Dorsolateral prefrontal cortex (tissue), 120 donors: ENCODE measurements at regions of chr17 and their contacts with region 1.

Region 1: DNA sequence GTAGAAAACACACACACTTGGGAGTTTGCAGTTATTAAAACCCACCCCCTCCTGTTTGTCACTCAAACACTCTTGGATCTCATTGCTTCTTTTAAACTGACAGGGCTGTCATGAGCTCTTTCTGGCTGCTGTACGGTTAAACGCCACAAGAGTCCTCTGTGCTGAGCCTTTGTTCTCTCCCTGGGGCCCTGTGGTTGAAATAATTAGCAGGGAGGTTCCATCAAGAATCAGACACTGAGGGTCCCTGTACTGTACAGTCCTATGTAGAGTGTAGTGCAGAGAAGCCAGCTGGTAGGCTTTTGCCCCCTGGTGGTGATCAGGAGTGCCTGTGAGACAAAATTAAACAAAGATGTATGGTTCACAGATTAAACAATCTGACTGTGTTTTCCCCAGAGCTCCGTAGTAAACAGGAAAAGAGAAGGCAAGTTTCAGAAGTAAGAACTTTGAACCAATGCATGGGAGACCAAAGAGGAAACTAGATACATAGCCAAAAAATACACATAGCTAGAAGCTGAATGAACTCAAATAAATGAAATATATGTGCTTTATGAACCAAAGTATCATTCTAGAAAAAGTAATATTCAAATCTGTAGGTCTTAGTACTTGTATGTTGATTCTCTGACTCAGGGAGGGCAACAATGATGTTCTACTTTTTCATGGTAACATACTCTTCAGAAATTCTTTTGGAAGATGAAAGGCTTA is 1.4 kb upstream of the SSH2 start:
- DNase-seq: peak; percentile 55 to 93 (median 81)
- H3K4me3 ChIP-seq: peak overlapping the region; percentile 51 to 94 (median 82)
- H3K27ac ChIP-seq: peak overlapping the region; percentile 41 to 98 (median 94)
- H3K27me3 ChIP-seq: no peaks in the 10 kb centered on the region
- CTCF ChIP-seq: peak; percentile 80 to 100 (median 92)

Region 2: GRCh38 chr17:29622337-29623282 is 308.8 kb before region 1 on chr17 and contains the start of gene CORO6:
- intact Hi-C with region 1: loop called (anchors 5 kb)
- DNase-seq: peak in 5 of 10 donors; percentile 64 to 79 (median 69)
- H3K4me3 ChIP-seq: peak within 1 kb of the TSS; percentile 42 to 92 (median 80)
- H3K27ac ChIP-seq: peak within 1 kb of the TSS in 53 of 59 donors; percentile 1 to 89 (median 77)
- H3K27me3 ChIP-seq: no peaks in the 10 kb centered on the region
- CTCF ChIP-seq: peak in 3 of 56 donors; percentile 10 to 15 (median 14)
- total RNA-seq, gene CORO6: 31.5 to 153 (median 80.8) TPM

Region 3: DNA sequence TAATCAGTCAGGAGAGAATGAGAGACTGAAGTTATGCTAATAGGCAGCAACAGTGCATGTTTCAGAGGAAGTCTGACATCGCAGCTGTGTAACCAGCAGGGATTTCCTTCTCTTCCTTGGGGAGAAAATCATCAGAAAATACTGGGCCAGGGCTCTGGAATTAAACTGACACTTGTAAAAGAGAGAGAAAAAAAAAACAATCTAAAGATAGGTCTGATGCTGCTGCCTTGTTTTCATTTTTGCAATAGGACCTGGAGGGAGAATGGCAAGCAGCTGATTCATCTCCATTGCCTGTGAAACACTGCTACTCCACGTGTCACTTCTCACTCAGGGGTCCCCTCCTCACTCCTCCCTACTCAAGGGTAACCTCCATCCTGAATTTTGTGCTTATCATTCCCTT is 291.0 kb before region 1 on chr17:
- intact Hi-C with region 1: loop called in 1 of 2 experiments (anchors 1 kb)
- DNase-seq: no peak
- H3K4me3 ChIP-seq: peak overlapping the region in 3 of 59 donors; percentile 2 to 16 (median 12)
- H3K27ac ChIP-seq: peak overlapping the region in 57 of 59 donors; percentile 20 to 87 (median 72)
- H3K27me3 ChIP-seq: no peaks in the 10 kb centered on the region
- CTCF ChIP-seq: peak in 1 of 56 donors; percentile 4

Region 4: DNA sequence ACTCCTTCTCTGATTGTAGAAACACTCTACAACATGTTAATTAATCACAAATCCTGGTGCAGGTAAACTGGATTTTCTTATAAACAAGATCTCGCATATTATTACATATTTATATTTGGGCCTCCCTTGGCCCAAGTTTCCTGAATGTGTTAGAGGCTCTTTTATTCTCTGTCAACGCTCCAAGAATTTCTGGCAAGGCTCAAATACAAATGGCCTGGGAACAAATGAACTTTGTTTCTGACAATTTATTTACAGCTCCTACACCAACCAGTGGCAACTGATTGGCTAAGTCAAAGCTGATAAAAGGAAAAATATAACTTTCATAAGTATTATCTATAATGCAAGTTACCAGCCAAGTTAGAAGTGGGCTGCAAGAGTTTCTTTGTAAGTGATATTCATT is 243.8 kb before region 1 on chr17:
- intact Hi-C with region 1: loop called in 1 of 2 experiments (anchors 5 kb)
- DNase-seq: no peak
- H3K4me3 ChIP-seq: no peak overlapping the region
- H3K27ac ChIP-seq: peak overlapping the region in 58 of 59 donors; percentile 63 to 96 (median 90)
- H3K27me3 ChIP-seq: no peaks in the 10 kb centered on the region
- CTCF ChIP-seq: no peak

Region 5: DNA sequence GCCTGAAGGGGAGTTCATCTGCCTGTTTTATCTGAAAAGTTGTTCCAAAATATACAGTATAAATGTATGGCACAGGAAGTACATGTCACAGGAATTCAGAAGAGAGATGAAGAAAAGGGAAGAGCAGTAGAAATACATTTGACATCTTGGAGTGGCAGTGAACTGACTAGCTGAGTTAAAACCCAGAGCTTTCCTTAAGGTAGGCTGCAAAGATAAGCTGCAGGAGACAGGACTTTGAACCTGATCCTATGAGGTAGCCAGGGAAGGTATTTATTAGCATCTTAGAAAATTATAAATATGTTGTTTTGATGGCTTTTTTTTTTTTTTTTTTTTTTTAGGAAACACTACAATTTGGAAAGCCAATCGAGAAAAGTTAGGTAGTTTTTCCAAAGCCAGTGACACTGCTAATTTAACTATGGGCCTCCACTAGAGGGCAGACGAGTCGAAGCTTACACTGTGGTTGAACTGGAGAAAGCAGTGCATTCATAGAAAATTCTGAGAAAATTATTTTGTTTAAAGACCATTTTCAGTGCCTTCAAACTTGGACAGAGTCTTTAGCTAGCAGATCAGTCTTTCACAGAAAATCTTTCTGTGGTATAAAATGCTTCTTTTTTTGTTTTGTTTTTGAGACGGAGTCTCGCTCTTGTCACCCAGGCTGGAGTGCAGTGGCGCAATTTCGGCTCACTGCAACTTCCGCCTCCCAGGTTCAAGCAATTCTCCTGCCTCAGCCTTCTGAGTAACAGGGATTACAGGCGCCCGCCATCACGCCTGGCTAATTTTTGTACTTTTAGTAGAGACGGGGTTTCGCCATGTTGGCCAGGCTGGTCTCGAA is 123.6 kb before region 1 on chr17:
- intact Hi-C with region 1: loop called (anchors 1 to 2 kb)
- DNase-seq: peak in 7 of 10 donors; percentile 48 to 82 (median 63)
- H3K4me3 ChIP-seq: peak overlapping the region in 33 of 59 donors; percentile 3 to 46 (median 21)
- H3K27ac ChIP-seq: peak overlapping the region in 29 of 59 donors; percentile 1 to 81 (median 38)
- H3K27me3 ChIP-seq: no peaks in the 10 kb centered on the region
- CTCF ChIP-seq: peak; percentile 72 to 92 (median 85)

Region 6: DNA sequence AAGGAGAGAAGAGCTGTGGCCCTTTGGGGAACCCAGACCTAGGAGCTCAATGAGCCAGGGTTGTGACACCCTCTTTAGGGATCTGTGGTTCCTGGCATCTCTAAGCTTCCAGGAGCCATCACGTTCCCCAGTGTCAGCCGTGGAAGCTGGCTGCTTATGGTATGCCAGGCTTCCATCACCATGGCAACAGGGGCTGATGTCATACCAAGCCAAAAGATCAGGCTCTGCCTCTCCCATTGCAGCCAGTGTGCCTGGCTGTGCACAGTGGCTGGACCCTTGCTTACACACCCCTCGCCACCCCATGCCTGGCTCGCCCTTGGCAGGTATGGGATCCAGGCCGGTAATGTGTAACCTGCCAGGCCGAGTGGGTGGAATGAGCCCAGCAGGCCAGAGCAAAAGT is 92.4 kb before region 1 on chr17:
- intact Hi-C with region 1: no loop called
- DNase-seq: peak in 8 of 10 donors; percentile 36 to 63 (median 46)
- H3K4me3 ChIP-seq: no peak overlapping the region
- H3K27ac ChIP-seq: no peak overlapping the region
- H3K27me3 ChIP-seq: no peaks in the 10 kb centered on the region
- CTCF ChIP-seq: no peak

Region 7: DNA sequence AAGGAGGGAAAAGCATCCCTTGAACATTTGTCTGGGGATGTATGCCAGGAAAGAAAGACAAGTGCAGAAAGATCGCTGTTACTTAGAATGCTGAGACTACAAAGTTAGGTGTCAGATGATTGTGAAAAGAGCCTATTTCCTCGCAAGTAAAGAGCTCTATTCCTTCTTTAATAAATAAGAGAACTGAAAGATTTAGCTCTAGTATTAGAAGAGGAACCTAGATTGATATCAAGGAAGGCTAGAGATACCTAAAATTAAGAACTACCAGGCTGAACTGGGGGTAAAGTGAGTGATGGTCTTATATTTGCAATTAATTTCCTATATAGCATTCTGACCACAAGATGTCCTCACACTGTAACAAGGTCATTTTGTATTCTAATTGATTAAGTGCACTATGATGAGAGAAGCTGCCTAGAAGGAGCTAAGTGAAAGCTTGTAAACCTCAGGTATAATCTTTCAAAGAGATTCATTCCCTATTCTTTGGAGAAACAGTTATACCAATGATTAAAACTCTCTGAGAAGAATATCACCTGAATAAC is 63.7 kb before region 1 on chr17:
- intact Hi-C with region 1: loop called (anchors 2 kb)
- DNase-seq: no peak
- H3K4me3 ChIP-seq: no peak overlapping the region
- H3K27ac ChIP-seq: peak overlapping the region in 35 of 59 donors; percentile 0 to 90 (median 36)
- H3K27me3 ChIP-seq: no peaks in the 10 kb centered on the region
- CTCF ChIP-seq: peak in 51 of 56 donors; percentile 13 to 71 (median 47)

Region 8: GRCh38 chr17:29948448-29949215 is 17.2 kb after region 1 on chr17:
- intact Hi-C with region 1: no loop called
- DNase-seq: no peak
- H3K4me3 ChIP-seq: no peak overlapping the region
- H3K27ac ChIP-seq: no peak overlapping the region
- H3K27me3 ChIP-seq: no peaks in the 10 kb centered on the region
- CTCF ChIP-seq: no peak

Region 9: DNA sequence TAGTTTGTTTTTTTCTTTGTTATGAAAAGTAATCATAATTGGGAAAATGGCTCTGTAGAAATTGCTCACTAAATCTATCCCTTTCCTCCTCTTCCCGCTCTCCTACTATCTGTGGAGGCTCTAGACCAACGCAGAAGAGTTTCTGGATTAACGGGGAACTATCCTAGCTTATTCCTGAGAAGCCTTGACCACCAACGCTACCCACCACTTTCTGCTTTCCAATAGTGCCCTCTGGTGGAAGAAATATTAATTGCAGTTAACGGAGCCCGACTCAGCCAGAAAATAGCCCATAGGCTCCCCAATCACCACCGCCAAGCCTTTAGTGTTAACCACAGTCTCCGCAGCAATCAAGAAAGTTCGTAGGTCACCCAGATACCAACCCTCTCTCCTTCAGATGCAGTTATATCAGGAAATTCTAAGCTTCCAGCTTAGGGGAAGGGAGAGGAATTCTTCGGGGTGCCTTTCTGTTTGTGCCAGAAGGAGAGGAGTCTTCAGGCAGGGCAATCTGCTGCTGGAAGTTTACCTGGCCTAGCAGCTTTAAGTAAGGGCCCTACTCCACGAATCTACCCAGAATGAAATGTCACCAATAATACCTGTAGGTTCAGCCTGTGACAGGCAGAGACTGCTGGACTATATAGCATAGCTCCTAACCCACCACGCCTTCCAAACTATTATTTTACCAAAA is 162.2 kb after region 1 on chr17:
- intact Hi-C with region 1: loop called in 1 of 2 experiments (anchors 10 kb)
- DNase-seq: peak in 4 of 10 donors; percentile 32 to 50 (median 44)
- H3K4me3 ChIP-seq: peak overlapping the region in 3 of 59 donors; percentile 16 to 31 (median 20)
- H3K27ac ChIP-seq: no peak overlapping the region
- H3K27me3 ChIP-seq: peaks cover 0 to under 1% (median 0%) of the 10 kb centered on the region in 45 donors
- CTCF ChIP-seq: peak; percentile 70 to 96 (median 86)